HCT116 (cell line): ENCODE measurements at regions of chr19 and their contacts with region 1.

Region 1: DNA sequence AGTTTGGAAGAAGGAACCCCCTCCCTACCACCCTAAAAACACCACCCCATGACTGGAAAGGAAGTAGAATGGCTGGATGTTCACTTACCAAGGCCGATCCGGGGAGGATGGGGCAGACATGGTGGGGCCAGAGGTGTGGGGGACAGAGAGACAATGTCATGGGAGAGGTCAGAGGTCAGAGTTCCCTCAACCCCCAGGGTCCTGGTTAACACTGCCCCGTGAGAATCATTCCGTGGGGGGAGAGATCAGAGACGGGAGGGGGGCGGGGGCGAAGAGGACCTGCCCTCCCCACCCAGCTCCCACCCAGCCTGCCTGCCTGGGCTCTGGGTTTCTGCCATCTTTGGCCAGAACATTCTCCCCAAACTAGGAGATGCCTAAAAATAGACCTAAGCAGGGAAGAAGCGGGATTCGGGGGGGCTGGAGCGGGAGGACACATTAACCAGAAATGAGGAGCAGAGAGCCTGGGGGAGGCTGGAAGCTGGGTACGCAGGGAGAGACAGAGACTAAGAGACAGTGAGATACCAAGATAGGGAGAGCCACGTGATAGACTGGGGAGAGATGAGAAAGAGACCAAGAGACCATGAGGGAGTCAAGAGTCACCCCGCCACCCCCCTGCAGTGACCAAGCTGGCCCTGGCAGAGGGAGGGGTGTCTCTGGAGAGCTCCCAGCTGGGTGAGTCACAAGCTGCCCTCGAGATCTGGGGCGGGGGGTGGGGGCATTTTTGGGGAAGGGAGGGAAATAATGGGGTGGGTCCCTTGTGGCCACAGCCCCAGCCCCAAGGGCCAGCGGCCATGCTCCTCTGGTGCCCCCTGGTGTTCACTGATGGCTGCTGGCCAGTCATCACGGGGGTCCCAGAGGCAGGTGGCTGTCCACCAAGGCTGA is 6.1 kb upstream of the KANK2 start:
- DNase-seq: no peak
- ATAC-seq: peak; percentile 88
- H3K4me3 ChIP-seq: no peak overlapping the region
- H3K27ac ChIP-seq: no peak overlapping the region; the same call in 1 of the 2 replicates
- H3K4me1 ChIP-seq: peaks cover 13 to 20% of the 10 kb centered on the region in 2 experiments; a peak in 3 of 4 replicates
- H3K27me3 ChIP-seq: no peaks in the 10 kb centered on the region
- CTCF ChIP-seq: peak; percentile 69 to 83 (median 77); a peak in 5 of 6 replicates
- POLR2A ChIP-seq: no peak
- RAD21 ChIP-seq: peak; percentile 89

Region 2: DNA sequence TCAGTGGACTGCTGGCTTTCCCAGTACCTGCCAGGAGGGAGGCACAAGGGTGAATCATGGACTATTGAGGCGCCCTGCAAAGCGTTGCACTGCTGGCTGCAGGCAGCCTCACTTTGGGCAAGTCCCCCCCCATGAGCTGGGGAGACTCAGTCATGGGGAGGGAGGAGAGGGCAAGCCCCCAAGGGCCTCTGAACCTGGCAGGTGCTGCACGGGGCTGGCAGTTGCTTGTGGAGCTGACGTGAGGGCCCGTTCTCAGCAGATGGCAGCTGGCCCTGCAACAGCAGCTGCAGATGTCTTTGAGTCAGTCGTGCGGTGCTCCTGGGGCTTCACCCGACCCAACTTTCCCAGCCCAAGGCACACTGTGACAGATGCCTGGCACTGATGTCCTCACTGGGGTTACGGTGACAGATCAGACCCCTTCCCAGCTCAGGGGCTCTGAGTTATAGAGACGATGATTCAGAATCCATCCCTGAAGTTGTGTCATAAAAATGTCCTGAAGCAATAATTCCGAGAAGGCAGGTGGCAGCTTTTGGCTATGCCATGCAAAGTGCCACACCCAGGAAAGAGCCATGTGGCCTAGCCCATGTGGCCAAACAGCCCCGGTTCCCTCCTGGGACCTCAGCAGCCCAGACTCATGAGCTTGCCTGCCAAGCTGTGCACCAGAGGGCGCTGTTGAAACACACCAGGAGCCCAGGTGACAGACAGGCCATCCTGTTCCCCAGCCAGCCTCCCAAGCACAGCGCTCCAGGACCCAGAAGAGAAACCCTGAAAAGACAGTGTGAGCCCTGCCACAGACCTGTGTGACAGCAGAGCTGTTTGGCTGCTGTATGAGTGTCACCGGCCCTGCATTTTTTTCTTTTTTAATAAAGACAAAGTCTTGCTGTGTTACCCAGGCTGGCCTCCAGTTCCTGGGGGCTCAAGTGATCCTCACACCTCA is 167.7 kb before region 1 on chr19:
- CTCF ChIA-PET with region 1: interaction called, 11 read pairs
- POLR2A ChIA-PET with region 1: no interaction called
- RAD21 ChIA-PET with region 1: no interaction called
- intact Hi-C with region 1: loop called (anchors 2 kb)
- DNase-seq: peak; percentile 73
- ATAC-seq: peak; percentile 99
- H3K4me3 ChIP-seq: no peak overlapping the region
- H3K27ac ChIP-seq: peak overlapping the region; percentile 31; the same call in 1 of the 2 replicates
- H3K4me1 ChIP-seq: peaks cover 0 to 8% of the 10 kb centered on the region in 2 experiments; a peak in 1 of 4 replicates
- H3K27me3 ChIP-seq: no peaks in the 10 kb centered on the region
- CTCF ChIP-seq: peak; percentile 88 to 93 (median 89)
- POLR2A ChIP-seq: no peak
- RAD21 ChIP-seq: peak; percentile 95

Region 3: DNA sequence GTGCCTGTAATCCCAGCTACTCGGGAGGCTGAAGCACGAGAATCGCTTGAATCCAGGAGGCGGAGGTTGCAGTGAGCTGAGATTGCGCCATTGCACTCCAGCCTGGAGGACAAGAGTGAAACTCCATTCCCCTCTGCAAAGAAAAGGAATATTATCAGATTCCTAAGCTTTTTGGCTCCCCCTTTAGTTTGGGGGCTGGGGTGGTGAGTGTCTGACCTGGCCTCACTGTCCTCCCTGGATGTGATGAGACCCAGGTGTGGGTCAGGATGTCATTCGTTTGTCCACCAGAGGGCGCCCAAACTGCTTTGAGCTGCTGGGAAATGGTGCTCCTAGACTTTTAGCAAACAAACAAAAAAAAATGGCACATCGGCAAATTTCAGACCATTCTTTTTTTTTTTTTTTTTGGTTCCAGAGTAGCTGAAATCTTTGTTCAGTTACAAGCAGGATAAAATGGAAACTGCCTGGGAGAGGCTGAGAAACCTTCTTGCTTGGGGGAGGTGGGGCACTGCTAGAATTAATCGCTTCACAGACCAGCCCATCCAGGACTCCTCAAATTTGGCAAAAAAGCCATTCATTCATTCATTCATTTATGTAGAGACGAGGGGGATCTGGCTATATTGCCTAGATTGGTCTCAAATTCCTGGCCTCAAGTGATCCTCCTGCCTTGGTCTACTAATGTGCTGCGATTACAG is 77.3 kb before region 1 on chr19:
- CTCF ChIA-PET with region 1: interaction called, 4 read pairs
- POLR2A ChIA-PET with region 1: no interaction called
- RAD21 ChIA-PET with region 1: interaction called in 1 of 2 experiments, 4 read pairs
- intact Hi-C with region 1: loop called (anchors 1 kb)
- DNase-seq: peak; percentile 39
- ATAC-seq: peak; percentile 75
- H3K4me3 ChIP-seq: no peak overlapping the region
- H3K27ac ChIP-seq: no peak overlapping the region
- H3K4me1 ChIP-seq: peaks cover 0 to 3% of the 10 kb centered on the region in 2 experiments; a peak in 1 of 4 replicates
- H3K27me3 ChIP-seq: no peaks in the 10 kb centered on the region
- CTCF ChIP-seq: peak; percentile 64 to 78 (median 77); a peak in 5 of 6 replicates
- POLR2A ChIP-seq: no peak
- RAD21 ChIP-seq: peak; percentile 56

Region 4: GRCh38 chr19:11137542-11138384 is 65.7 kb before region 1 on chr19:
- CTCF ChIA-PET with region 1: interaction called, 5 read pairs
- POLR2A ChIA-PET with region 1: no interaction called
- RAD21 ChIA-PET with region 1: interaction called in 1 of 2 experiments, 5 read pairs
- intact Hi-C with region 1: loop called (anchors 1 kb)
- DNase-seq: no peak
- ATAC-seq: peak; percentile 35
- H3K4me3 ChIP-seq: peak overlapping the region; percentile 26 to 50
- H3K27ac ChIP-seq: peak overlapping the region; percentile 92
- H3K4me1 ChIP-seq: peaks cover 50 to 57% of the 10 kb centered on the region in 2 experiments
- H3K27me3 ChIP-seq: no peaks in the 10 kb centered on the region
- CTCF ChIP-seq: peak; percentile 78 to 86 (median 79)
- POLR2A ChIP-seq: no peak
- RAD21 ChIP-seq: peak; percentile 95